ENCODE measurements at regions of chr16 and their contacts with region 1.

Region 1: GRCh38 chr16:70770626-70771552 is 30.1 kb downstream of the VAC14 start:
- DNase-seq: peak; percentile 76
- H3K4me3 Mint-ChIP-seq: no peak overlapping the region
- H3K27ac Mint-ChIP-seq: peak overlapping the region; percentile 71
- H3K4me1 Mint-ChIP-seq: peaks cover 8% of the 10 kb centered on the region
- H3K27me3 Mint-ChIP-seq: no peaks in the 10 kb centered on the region

Region 2: GRCh38 chr16:70653809-70654771 is 116.8 kb before region 1 on chr16:
- CTCF ChIA-PET with region 1: interaction called, 12 read pairs
- POLR2A ChIA-PET with region 1: no interaction called
- DNase-seq: peak; percentile 87
- H3K4me3 Mint-ChIP-seq: peak overlapping the region; percentile 5
- H3K27ac Mint-ChIP-seq: peak overlapping the region; percentile 60
- H3K4me1 Mint-ChIP-seq: peaks cover 7% of the 10 kb centered on the region
- H3K27me3 Mint-ChIP-seq: no peaks in the 10 kb centered on the region

Region 3: GRCh38 chr16:70679666-70680494 is 91.0 kb before region 1 on chr16:
- CTCF ChIA-PET with region 1: interaction called, 11 read pairs
- POLR2A ChIA-PET with region 1: no interaction called
- DNase-seq: no peak
- H3K4me3 Mint-ChIP-seq: no peak overlapping the region
- H3K27ac Mint-ChIP-seq: no peak overlapping the region
- H3K4me1 Mint-ChIP-seq: peaks cover 12% of the 10 kb centered on the region
- H3K27me3 Mint-ChIP-seq: peaks cover 4% of the 10 kb centered on the region

Region 4: DNA sequence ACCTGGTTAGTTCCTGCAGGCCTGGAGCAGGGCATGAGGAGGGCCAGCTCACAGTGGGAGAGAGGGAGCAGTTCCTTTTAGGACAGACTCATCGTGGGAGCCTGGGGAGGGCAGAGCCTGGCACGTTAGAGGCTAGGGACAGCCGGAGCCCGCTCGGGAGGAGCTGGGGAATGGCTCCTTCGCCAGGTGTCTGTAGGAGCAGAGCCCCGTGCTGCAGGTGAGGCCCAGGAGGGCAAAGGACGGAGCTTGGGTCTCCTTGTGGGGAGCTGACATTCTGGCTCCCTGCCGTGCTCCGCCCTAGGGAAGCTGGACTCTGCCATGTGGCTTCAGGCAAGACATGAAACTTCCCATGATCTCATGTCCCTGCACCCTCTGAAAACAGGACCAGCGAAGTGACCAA is 66.3 kb before region 1 on chr16:
- CTCF ChIA-PET with region 1: no interaction called
- POLR2A ChIA-PET with region 1: no interaction called
- DNase-seq: no peak
- H3K4me3 Mint-ChIP-seq: no peak overlapping the region
- H3K27ac Mint-ChIP-seq: no peak overlapping the region
- H3K4me1 Mint-ChIP-seq: peaks cover 9% of the 10 kb centered on the region
- H3K27me3 Mint-ChIP-seq: no peaks in the 10 kb centered on the region

Region 5: GRCh38 chr16:70737377-70738082 is 33.4 kb before region 1 on chr16:
- CTCF ChIA-PET with region 1: interaction called, 15 read pairs
- POLR2A ChIA-PET with region 1: no interaction called
- DNase-seq: peak; percentile 91
- H3K4me3 Mint-ChIP-seq: peak overlapping the region; percentile 75
- H3K27ac Mint-ChIP-seq: peak overlapping the region; percentile 100
- H3K4me1 Mint-ChIP-seq: peaks cover 79% of the 10 kb centered on the region
- H3K27me3 Mint-ChIP-seq: no peaks in the 10 kb centered on the region

Region 6: GRCh38 chr16:70750893-70751475 is 19.9 kb before region 1 on chr16:
- CTCF ChIA-PET with region 1: interaction called, 15 read pairs
- POLR2A ChIA-PET with region 1: no interaction called
- DNase-seq: no peak
- H3K4me3 Mint-ChIP-seq: no peak overlapping the region
- H3K27ac Mint-ChIP-seq: peak overlapping the region; percentile 85
- H3K4me1 Mint-ChIP-seq: peaks cover 59% of the 10 kb centered on the region
- H3K27me3 Mint-ChIP-seq: no peaks in the 10 kb centered on the region

Region 7: DNA sequence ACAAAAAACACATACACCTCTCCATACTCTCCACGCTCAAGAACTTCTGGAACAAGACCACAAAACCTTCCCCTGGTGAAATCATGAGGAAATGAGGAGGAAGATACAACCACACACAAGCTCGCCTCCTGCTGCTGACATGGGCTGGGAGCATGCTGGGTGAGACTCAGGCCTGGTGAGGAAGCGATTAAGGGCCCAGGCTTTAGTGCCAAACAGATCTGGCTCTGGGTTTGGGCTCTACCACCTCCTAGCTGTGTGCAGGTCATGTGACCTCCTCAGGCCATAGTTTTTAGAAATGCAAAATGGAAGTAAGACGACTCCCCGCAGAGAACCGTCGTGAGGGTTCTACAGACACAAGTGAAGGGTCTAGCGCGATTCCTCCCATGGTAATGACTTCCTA is 11.2 kb before region 1 on chr16:
- CTCF ChIA-PET with region 1: interaction called, 18 read pairs
- POLR2A ChIA-PET with region 1: no interaction called
- DNase-seq: no peak
- H3K4me3 Mint-ChIP-seq: no peak overlapping the region
- H3K27ac Mint-ChIP-seq: peak overlapping the region; percentile 84
- H3K4me1 Mint-ChIP-seq: peaks cover 15% of the 10 kb centered on the region
- H3K27me3 Mint-ChIP-seq: no peaks in the 10 kb centered on the region

Region 8: GRCh38 chr16:70784692-70785555 is 14.0 kb after region 1 on chr16:
- CTCF ChIA-PET with region 1: interaction called, 10 read pairs
- POLR2A ChIA-PET with region 1: no interaction called
- DNase-seq: no peak
- H3K4me3 Mint-ChIP-seq: no peak overlapping the region
- H3K27ac Mint-ChIP-seq: no peak overlapping the region
- H3K4me1 Mint-ChIP-seq: no peaks in the 10 kb centered on the region
- H3K27me3 Mint-ChIP-seq: no peaks in the 10 kb centered on the region

Region 9: DNA sequence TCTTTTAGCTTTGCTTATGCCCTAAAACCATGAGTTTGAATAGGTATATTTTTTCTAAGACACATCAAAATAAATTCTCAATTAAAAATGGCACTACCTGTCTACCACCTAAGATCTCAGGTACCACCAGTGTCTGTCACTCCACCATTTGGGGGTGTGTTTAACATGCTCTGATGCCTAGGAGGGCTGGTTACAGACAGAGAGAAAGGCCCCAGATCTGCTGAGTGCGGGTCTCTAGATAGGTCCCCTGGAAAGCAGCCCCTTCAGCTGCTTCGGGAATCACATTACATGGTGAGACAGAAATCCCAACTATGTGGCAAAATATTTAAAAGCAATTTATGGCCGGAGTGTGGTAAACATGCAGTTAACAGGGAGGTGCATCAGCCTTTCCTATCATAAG is 30.7 kb after region 1 on chr16:
- CTCF ChIA-PET with region 1: no interaction called
- POLR2A ChIA-PET with region 1: no interaction called
- DNase-seq: no peak
- H3K4me3 Mint-ChIP-seq: peak overlapping the region; percentile 84
- H3K27ac Mint-ChIP-seq: no peak overlapping the region
- H3K4me1 Mint-ChIP-seq: peaks cover 29% of the 10 kb centered on the region
- H3K27me3 Mint-ChIP-seq: peaks cover 5% of the 10 kb centered on the region